Posterior vena cava (tissue), 2 donors: ENCODE measurements at regions of chr2 and their contacts with region 1.

Region 1: GRCh38 chr2:12176623-12177454 is 430.4 kb downstream of the LPIN1 start:
- DNase-seq: no peak

Region 2: GRCh38 chr2:12164689-12165088 is 12.2 kb before region 1 on chr2:
- intact Hi-C with region 1: loop called in 1 of 2 experiments (anchors 1 kb)
- DNase-seq: no peak